ENCODE measurements at regions of chr20 and their contacts with region 1.

Region 1: DNA sequence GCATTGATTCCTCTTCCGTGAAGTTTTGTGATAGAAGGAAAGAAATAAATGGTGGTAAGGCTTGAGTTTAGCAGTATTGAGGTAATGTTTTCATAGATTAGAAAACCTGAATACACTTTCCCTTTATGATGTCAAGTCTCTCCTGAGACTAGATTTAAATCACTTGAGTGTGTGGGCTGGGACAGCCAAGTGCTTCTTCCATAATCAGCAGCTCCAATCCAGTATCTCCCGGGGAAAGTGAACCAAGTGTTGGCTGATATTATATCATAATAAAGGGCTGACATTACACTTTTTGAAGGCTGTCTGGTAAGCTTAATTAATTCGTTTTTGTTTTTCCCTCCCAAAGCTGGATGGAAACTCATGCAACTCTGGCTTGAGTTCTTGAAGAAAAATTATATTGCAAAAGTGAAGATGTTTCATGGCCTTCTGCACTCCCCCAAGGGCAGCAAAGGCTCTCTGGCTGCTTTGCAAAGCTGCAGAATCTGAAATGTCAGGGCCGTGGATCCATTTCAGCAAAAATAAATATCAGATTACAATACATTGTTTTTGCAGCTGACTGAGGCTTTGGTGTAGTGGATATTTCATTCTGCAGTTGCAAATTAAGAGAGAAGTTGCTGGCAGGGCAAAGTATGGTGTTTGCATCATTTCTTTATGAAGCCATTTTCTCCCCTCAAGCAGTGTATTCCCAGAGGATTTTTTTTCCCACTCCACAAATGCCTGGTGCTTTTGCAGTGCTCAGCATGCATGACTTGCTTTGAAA is 101.2 kb downstream of the MKKS start:
- DNase-seq: no peak
- H3K4me3 ChIP-seq: no peak overlapping the region
- H3K27ac ChIP-seq: no peak overlapping the region
- H3K4me1 ChIP-seq: no peaks in the 10 kb centered on the region
- H3K27me3 ChIP-seq: no peaks in the 10 kb centered on the region
- CTCF ChIP-seq: no peak
- POLR2A ChIP-seq: no peak

Region 2: GRCh38 chr20:9769954-9770353 is 562.9 kb before region 1 on chr20:
- intact Hi-C with region 1: loop called (anchors 5 kb)
- DNase-seq: no peak
- H3K4me3 ChIP-seq: no peak overlapping the region
- H3K27ac ChIP-seq: no peak overlapping the region
- H3K4me1 ChIP-seq: no peaks in the 10 kb centered on the region
- H3K27me3 ChIP-seq: no peaks in the 10 kb centered on the region
- CTCF ChIP-seq: no peak
- POLR2A ChIP-seq: no peak

Region 3: DNA sequence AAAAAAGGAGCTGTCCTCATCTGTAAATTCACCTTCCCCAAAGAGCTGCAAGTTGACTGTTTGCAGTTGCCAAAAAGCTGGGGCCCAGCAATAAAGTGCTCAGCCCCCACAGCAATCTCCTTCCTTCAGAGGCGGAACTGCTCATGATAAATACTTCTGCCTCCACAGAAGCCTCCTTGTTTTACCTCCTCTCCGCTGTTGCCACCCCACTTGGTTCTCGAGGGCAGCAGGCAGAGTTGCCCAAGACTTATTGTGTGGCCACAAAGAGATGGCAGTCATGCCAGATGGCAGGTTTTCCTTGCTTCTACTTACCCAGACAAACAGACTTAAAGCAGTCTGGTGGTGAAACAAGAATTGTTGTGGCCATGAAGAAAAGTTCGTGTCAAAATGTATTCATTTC is 168.6 kb after region 1 on chr20:
- intact Hi-C with region 1: no loop called
- DNase-seq: peak in 1 of 2 donors; percentile 89
- H3K4me3 ChIP-seq: peak overlapping the region in 2 of 3 donors; percentile 6 to 42
- H3K27ac ChIP-seq: peak overlapping the region; percentile 25 to 60
- H3K4me1 ChIP-seq: peaks cover 0 to 14% of the 10 kb centered on the region in 2 donors
- H3K27me3 ChIP-seq: no peaks in the 10 kb centered on the region
- CTCF ChIP-seq: no peak
- POLR2A ChIP-seq: no peak

Measured in breast epithelium (tissue), 4 donors.